ENCODE measurements at regions of chr1 and their contacts with region 1.

Region 1: GRCh38 chr1:201925981-201926645 is 20.2 kb downstream of the LMOD1 start:
- DNase-seq: no peak
- ATAC-seq: no peak
- H3K4me3 ChIP-seq: no peak overlapping the region
- H3K27ac ChIP-seq: no peak overlapping the region
- H3K4me1 ChIP-seq: no peaks in the 10 kb centered on the region
- H3K27me3 ChIP-seq: peaks cover 3% of the 10 kb centered on the region; the same call in 1 of the 2 replicates
- CTCF ChIP-seq: no peak

Region 2: DNA sequence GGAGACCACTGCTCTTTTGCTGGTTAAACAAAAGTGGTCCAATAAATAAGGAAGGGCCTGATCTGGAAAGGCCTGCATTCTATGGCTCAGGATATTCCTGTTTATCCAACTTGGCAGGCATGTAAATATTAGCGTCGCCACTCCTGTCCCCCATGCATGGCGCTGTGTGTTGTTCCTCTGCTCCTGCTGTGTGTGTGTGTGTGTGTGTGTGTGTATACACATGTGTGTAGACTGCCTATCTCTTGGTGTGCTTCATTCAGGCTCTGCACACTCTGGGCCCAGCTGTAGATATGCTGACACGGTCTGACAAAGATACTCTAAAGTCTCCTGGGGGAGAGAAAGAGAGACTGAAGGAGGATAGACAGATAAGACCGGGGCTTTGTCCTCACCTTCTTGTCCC is 13.5 kb after region 1 on chr1:
- CTCF ChIA-PET with region 1: interaction called, 10 read pairs
- POLR2A ChIA-PET with region 1: interaction called, 6 read pairs
- in situ Hi-C with region 1: no loop called
- intact Hi-C with region 1: no loop called
- DNase-seq: no peak
- ATAC-seq: no peak
- H3K4me3 ChIP-seq: no peak overlapping the region
- H3K27ac ChIP-seq: no peak overlapping the region
- H3K4me1 ChIP-seq: no peaks in the 10 kb centered on the region
- H3K27me3 ChIP-seq: peaks cover 2% of the 10 kb centered on the region; the same call in 1 of the 2 replicates
- CTCF ChIP-seq: no peak

Region 3: DNA sequence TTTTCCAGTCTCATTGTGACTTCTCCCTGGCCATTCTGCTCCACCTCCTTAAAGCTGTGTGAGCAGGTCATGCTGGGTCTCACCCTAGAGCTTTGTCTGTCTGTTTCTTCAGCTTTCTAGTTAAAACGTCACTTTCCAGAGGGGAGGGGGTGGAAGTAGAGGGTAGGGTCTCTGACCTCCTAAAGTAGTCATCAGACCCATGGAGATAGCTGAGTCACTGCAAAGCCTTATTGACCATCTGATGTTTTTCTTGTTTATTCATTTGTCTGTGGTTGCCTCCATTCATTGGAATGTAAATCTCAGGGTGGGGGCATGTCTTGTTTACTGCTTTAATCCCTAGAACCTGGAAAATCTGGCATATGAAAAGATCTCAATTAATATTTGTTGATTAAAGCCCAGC is 137.0 kb after region 1 on chr1:
- CTCF ChIA-PET with region 1: no interaction called
- POLR2A ChIA-PET with region 1: interaction called, 13 read pairs
- in situ Hi-C with region 1: no loop called
- intact Hi-C with region 1: no loop called
- DNase-seq: peak; percentile 50
- ATAC-seq: no peak
- H3K4me3 ChIP-seq: no peak overlapping the region
- H3K27ac ChIP-seq: peak overlapping the region; percentile 48; the same call in 1 of the 2 replicates
- H3K4me1 ChIP-seq: peaks cover 13% of the 10 kb centered on the region; the same call in 1 of the 2 replicates
- H3K27me3 ChIP-seq: no peaks in the 10 kb centered on the region
- CTCF ChIP-seq: no peak

Region 4: GRCh38 chr1:202076050-202076511 is 150.0 kb after region 1 on chr1:
- CTCF ChIA-PET with region 1: no interaction called
- POLR2A ChIA-PET with region 1: no interaction called
- in situ Hi-C with region 1: no loop called
- intact Hi-C with region 1: no loop called
- DNase-seq: no peak
- ATAC-seq: no peak
- H3K4me3 ChIP-seq: no peak overlapping the region
- H3K27ac ChIP-seq: 0 out of 2 replicates have a peak overlapping the region, but pooled peaks have one; percentile 1
- H3K4me1 ChIP-seq: 0 out of 2 replicates have a peak, but pooled peaks cover 6% of the 10 kb centered on the region
- H3K27me3 ChIP-seq: no peaks in the 10 kb centered on the region
- CTCF ChIP-seq: no peak